B cell (primary cell): ENCODE measurements at regions of chr11 and their contacts with region 1.

Region 1: DNA sequence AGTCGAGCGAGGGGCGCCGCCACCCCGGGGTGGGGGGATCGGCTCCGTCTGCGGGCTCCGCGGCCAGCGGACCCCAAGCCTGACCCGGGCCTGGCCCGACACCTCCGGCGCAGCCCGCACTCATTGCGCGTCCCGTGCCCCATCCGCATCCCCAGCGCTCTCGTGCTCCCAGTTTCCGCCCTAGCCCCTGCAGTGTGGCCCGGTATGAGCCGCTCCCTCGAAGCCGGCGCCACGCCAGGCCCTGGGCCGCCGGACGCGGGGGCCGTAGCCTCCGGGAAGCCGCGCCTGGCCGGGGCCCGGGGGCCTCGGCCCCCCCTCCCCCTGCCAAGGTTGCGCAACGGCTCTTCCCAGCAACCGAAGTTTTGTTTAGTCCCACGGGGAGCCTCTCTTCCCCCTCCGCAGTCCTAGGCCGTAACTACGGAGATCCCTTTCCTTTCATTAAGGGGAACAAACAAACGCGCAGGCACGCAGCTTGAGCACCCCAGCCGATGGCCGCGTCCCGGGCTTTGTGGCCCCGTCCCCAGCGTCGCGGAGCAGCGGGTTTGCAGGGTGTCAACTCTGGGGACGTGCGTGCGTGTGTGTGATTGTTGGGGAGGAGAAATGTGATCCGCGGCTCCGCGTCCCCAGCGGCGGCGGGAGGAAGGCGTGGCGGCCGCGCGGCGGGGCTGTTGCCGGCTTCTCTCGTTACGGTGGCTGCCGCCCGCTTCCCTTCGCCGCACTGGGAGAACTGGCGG is 883 bp downstream of the HIPK3 start:
- DNase-seq: peak; percentile 86
- ATAC-seq: peak; percentile 34
- H3K4me3 ChIP-seq: peak overlapping the region; percentile 78 to 97 (median 90)
- H3K4me3 Mint-ChIP-seq: peak overlapping the region; percentile 93
- H3K27ac ChIP-seq: peak overlapping the region; percentile 98 to 99
- H3K27ac Mint-ChIP-seq: peak overlapping the region; percentile 100
- H3K4me1 ChIP-seq: peaks cover 22 to 26% of the 10 kb centered on the region in 2 donors
- H3K4me1 Mint-ChIP-seq: peaks cover 49% of the 10 kb centered on the region
- H3K27me3 ChIP-seq: no peaks in the 10 kb centered on the region
- H3K27me3 Mint-ChIP-seq: no peaks in the 10 kb centered on the region
- CTCF ChIP-seq: no peak

Region 2: GRCh38 chr11:32893343-32894148 is 364.5 kb before region 1 on chr11:
- CTCF ChIA-PET with region 1: no interaction called
- POLR2A ChIA-PET with region 1: no interaction called
- intact Hi-C with region 1: loop called (anchors 2 kb)
- DNase-seq: peak; percentile 79
- ATAC-seq: peak; percentile 44
- H3K4me3 ChIP-seq: peak overlapping the region; percentile 22 to 88 (median 83)
- H3K4me3 Mint-ChIP-seq: peak overlapping the region; percentile 88
- H3K27ac ChIP-seq: peak overlapping the region; percentile 61 to 70
- H3K27ac Mint-ChIP-seq: peak overlapping the region; percentile 93
- H3K4me1 ChIP-seq: peaks cover 12 to 16% of the 10 kb centered on the region in 2 donors
- H3K4me1 Mint-ChIP-seq: peaks cover 36% of the 10 kb centered on the region
- H3K27me3 ChIP-seq: no peaks in the 10 kb centered on the region
- H3K27me3 Mint-ChIP-seq: no peaks in the 10 kb centered on the region
- CTCF ChIP-seq: peak; percentile 63

Region 3: DNA sequence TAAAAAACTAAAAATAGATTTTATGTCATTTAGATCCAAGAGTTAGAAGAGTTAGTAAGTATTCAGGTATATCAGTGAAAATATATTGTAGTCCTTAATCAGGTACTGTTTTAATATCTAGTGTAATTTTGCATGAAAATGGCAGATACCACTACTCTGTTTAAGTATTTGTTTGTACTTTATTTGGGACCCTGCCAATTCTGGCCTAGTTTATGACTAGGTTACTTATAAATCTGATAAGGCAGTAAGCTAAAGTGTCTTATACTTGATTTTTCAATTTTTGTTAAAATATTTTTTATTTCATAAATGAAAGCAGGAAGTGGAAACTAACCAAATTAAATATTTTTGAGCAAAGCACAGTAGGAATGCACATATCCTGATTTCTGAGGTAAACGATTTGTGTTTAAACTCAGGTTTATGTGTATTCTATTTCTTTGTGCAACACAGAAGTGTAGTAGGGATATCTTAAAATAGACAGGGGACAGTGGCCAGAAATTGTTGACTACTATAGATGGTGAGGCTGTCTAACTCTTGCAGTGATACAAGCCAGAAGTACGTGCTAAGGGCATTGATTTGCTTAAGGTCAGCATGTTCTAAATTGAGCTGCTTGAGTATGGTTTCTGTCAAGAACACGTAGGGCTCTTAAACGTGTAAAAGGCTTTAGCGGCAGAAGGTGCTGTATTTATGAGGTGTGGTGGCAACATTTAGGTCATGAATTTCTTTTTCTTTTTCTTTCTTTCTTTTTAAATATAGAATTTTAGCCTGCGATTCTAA is 33.1 kb after region 1 on chr11:
- CTCF ChIA-PET with region 1: no interaction called
- POLR2A ChIA-PET with region 1: no interaction called
- intact Hi-C with region 1: no loop called
- DNase-seq: no peak
- ATAC-seq: no peak
- H3K4me3 ChIP-seq: no peak overlapping the region
- H3K4me3 Mint-ChIP-seq: peak overlapping the region; percentile 52
- H3K27ac ChIP-seq: no peak overlapping the region
- H3K27ac Mint-ChIP-seq: peak overlapping the region; percentile 28
- H3K4me1 ChIP-seq: no peaks in the 10 kb centered on the region
- H3K4me1 Mint-ChIP-seq: peaks cover 36% of the 10 kb centered on the region
- H3K27me3 ChIP-seq: no peaks in the 10 kb centered on the region
- H3K27me3 Mint-ChIP-seq: no peaks in the 10 kb centered on the region
- CTCF ChIP-seq: no peak

Region 4: DNA sequence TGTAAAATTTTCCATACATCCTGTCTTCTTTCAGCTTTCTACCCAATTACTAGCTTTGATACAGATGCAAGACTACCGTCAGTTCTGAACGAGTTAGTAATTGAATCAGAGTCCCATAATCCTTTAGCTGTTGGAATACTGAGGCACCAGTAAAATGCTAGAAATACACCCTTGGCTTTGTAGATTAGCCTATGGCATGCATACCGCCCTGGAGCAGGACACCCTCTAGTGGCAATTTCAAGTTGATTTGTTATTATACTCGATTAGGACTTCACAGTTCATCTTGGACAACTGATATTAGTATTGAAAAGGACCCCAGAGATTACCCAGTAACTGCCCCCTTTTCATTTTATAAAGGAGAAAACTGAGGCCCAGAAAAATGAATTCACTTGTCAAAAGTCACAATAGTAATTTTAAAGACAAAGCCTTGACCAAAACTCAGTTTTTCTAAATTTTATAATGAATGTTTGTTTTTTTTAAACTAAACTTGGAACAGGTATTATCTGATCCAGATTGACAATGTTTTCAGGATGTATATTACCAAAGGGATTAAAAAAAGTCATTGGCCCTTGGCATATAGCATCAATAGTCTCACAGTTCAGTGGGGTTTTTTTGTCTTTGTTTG is 71.8 kb after region 1 on chr11:
- CTCF ChIA-PET with region 1: interaction called, 4 read pairs
- POLR2A ChIA-PET with region 1: no interaction called
- intact Hi-C with region 1: loop called (anchors 2 kb)
- DNase-seq: peak; percentile 62
- ATAC-seq: peak; percentile 49
- H3K4me3 ChIP-seq: no peak overlapping the region
- H3K4me3 Mint-ChIP-seq: no peak overlapping the region
- H3K27ac ChIP-seq: no peak overlapping the region
- H3K27ac Mint-ChIP-seq: no peak overlapping the region
- H3K4me1 ChIP-seq: peaks cover 0 to 4% of the 10 kb centered on the region in 2 donors
- H3K4me1 Mint-ChIP-seq: peaks cover 20% of the 10 kb centered on the region
- H3K27me3 ChIP-seq: no peaks in the 10 kb centered on the region
- H3K27me3 Mint-ChIP-seq: no peaks in the 10 kb centered on the region
- CTCF ChIP-seq: peak; percentile 81

Region 5: DNA sequence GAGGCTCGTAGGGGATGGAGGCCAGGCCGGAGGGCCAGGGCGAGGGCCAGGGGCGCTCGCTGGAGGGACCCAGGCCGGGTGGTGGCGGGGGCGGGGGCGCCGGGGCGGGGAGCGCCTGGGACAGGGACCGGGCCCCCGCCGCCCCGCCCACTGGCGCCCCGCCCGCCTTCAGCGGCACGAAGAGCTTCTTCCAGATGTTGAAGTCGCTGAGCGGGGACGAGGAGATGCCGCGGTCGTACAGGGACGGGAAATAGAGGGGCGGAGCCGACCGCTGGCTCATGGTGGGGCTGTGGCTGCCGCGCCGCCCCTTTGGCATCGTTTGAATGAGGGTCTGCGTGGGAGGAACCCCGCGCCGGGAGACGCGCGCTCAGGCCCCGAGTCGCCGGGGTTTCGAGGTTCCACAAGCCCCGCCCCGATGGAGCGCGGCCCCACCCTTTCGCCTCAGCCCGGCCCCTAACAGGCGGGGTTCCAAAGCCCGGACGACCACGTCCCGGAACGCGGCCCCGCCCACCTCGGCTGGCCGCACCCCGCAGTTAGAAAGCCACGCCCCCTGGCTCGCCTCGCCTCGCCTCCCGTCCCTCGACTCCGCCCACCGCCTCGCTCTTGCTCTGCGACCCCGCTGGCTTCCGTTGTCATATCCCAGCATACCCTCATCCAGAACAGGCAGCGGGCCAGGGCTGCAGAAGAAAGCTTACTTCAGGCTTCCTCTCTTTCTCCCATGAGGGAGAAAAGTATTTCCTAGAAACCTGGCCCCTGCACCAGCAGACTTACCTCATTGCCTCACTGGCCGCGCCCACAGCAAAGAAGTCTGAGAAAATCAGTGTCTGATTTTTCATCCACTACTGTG is 442.6 kb after region 1 on chr11 and contains the start of gene C11orf91:
- CTCF ChIA-PET with region 1: no interaction called
- POLR2A ChIA-PET with region 1: no interaction called
- intact Hi-C with region 1: loop called (anchors 2 kb)
- DNase-seq: peak; percentile 97
- ATAC-seq: peak; percentile 99
- H3K4me3 ChIP-seq: peak within 1 kb of the TSS; percentile 53 to 74 (median 60)
- H3K4me3 Mint-ChIP-seq: peak within 1 kb of the TSS; percentile 93
- H3K27ac ChIP-seq: no peak within 1 kb of the TSS
- H3K27ac Mint-ChIP-seq: peak within 1 kb of the TSS; percentile 57
- H3K4me1 ChIP-seq: peaks cover 6 to 16% of the 10 kb centered on the region in 2 donors
- H3K4me1 Mint-ChIP-seq: peaks cover 17% of the 10 kb centered on the region
- H3K27me3 ChIP-seq: peaks cover 0 to 14% (median 3%) of the 10 kb centered on the region in 4 experiments
- H3K27me3 Mint-ChIP-seq: peaks cover 5% of the 10 kb centered on the region
- CTCF ChIP-seq: no peak
- total RNA-seq, gene C11orf91: not detected in 2 replicates

Region 6: GRCh38 chr11:33773987-33774735 is 516.1 kb after region 1 on chr11 and contains the start of gene FBXO3:
- CTCF ChIA-PET with region 1: no interaction called
- POLR2A ChIA-PET with region 1: no interaction called
- intact Hi-C with region 1: loop called (anchors 1 kb)
- DNase-seq: peak; percentile 90
- ATAC-seq: peak; percentile 94
- H3K4me3 ChIP-seq: peak within 1 kb of the TSS; percentile 66 to 91 (median 86)
- H3K4me3 Mint-ChIP-seq: peak within 1 kb of the TSS; percentile 92
- H3K27ac ChIP-seq: peak within 1 kb of the TSS; percentile 57 to 82
- H3K27ac Mint-ChIP-seq: peak within 1 kb of the TSS; percentile 95
- H3K4me1 ChIP-seq: peaks cover 21 to 24% of the 10 kb centered on the region in 2 donors
- H3K4me1 Mint-ChIP-seq: peaks cover 40% of the 10 kb centered on the region
- H3K27me3 ChIP-seq: peaks cover 0 to 22% (median 9%) of the 10 kb centered on the region in 4 experiments
- H3K27me3 Mint-ChIP-seq: peaks cover 19% of the 10 kb centered on the region
- CTCF ChIP-seq: no peak
- total RNA-seq, gene FBXO3: 32.7 and 34.3 TPM in 2 replicates